Colonic mucosa (tissue), 4 donors: ENCODE measurements at regions of chr1 and their contacts with region 1.

Region 1: GRCh38 chr1:244599937-244600350 is 53.0 kb upstream of the DESI2 start:
- DNase-seq: no peak
- H3K4me3 ChIP-seq: no peak overlapping the region
- H3K27ac ChIP-seq: no peak overlapping the region
- H3K4me1 ChIP-seq: no peaks in the 10 kb centered on the region
- H3K27me3 ChIP-seq: no peaks in the 10 kb centered on the region
- CTCF ChIP-seq: no peak

Region 2: DNA sequence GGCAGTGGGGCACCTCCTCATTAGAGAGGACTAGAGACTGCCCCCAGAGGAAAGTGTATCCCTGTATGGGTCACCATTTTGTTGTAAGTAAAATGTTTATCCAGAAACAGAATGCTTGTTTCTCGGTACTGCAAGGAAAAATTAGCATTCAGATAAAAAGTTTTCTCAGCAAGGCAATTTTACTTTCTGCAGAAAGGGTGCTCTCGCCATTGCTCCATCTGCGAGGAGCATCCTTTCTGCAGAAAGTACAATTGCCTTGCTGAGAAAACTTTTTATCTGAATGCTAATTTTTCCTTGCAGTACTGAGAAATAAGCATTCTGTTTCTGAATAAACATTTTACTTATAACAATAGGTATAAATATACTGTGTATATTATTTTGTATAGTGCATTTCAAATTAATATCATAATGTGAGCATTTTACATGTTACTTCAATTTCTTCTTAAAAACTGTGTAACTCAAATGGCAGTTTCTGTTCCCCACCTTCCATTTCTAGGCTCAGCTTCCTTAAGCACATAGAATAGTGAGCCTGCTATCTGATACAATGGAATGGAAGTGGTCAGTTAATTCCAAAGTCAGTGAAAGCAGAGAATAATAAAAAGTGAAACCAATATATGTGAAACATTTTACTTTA is 23.6 kb before region 1 on chr1:
- intact Hi-C with region 1: no loop called
- DNase-seq: no peak
- H3K4me3 ChIP-seq: no peak overlapping the region
- H3K27ac ChIP-seq: no peak overlapping the region
- H3K4me1 ChIP-seq: no peaks in the 10 kb centered on the region
- H3K27me3 ChIP-seq: no peaks in the 10 kb centered on the region
- CTCF ChIP-seq: no peak

Region 3: GRCh38 chr1:244796718-244797406 is 196.9 kb after region 1 on chr1:
- intact Hi-C with region 1: loop called (anchors 2 kb)
- DNase-seq: peak; percentile 73
- H3K4me3 ChIP-seq: no peak overlapping the region
- H3K27ac ChIP-seq: no peak overlapping the region
- H3K4me1 ChIP-seq: no peaks in the 10 kb centered on the region
- H3K27me3 ChIP-seq: no peaks in the 10 kb centered on the region
- CTCF ChIP-seq: peak; percentile 85